Vagina (tissue), 2 donors: ENCODE measurements at regions of chr11 and their contacts with region 1.

Region 1: GRCh38 chr11:112280268-112281126 is 19.8 kb upstream of the PLET1 start:
- DNase-seq: no peak
- H3K4me3 ChIP-seq: peak overlapping the region; percentile 41 to 45
- H3K27ac ChIP-seq: peak overlapping the region; percentile 54
- H3K4me1 ChIP-seq: no peaks in the 10 kb centered on the region
- H3K27me3 ChIP-seq: no peaks in the 10 kb centered on the region
- CTCF ChIP-seq: peak; percentile 16 to 80 (median 46)
- POLR2A ChIP-seq: no peak

Region 2: DNA sequence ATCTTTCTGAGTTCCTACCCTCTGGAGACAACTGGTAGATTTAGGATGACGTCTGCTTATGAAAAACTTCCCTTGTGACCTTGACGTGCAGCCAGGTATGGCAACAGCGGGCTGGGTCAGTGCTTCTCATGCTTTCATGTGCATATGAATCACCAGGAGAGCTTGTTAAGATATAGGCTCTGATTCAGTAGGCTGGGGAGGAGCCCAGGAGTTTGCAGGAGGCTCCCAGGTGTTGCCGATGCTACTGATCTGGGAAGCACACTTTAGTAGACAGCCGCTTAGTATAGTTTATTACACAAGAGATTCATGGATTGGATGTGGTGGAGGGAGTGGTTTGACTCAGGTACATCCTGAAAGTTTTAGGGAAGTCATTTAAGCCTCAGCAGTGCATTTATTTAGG is 319.6 kb before region 1 on chr11:
- intact Hi-C with region 1: no loop called
- DNase-seq: peak in 1 of 2 donors; percentile 92
- H3K4me3 ChIP-seq: no peak overlapping the region
- H3K27ac ChIP-seq: peak overlapping the region; percentile 69
- H3K4me1 ChIP-seq: peaks cover 5% of the 10 kb centered on the region
- H3K27me3 ChIP-seq: no peaks in the 10 kb centered on the region
- CTCF ChIP-seq: no peak
- POLR2A ChIP-seq: no peak

Region 3: GRCh38 chr11:112219476-112220232 is 60.8 kb before region 1 on chr11:
- intact Hi-C with region 1: loop called (anchors 5 kb)
- DNase-seq: no peak
- H3K4me3 ChIP-seq: no peak overlapping the region
- H3K27ac ChIP-seq: no peak overlapping the region
- H3K4me1 ChIP-seq: peaks cover 10% of the 10 kb centered on the region
- H3K27me3 ChIP-seq: no peaks in the 10 kb centered on the region
- CTCF ChIP-seq: peak; percentile 70 to 93 (median 76)
- POLR2A ChIP-seq: no peak